PC-3 (cell line): ENCODE measurements at regions of chr15 and their contacts with region 1.

Region 1: DNA sequence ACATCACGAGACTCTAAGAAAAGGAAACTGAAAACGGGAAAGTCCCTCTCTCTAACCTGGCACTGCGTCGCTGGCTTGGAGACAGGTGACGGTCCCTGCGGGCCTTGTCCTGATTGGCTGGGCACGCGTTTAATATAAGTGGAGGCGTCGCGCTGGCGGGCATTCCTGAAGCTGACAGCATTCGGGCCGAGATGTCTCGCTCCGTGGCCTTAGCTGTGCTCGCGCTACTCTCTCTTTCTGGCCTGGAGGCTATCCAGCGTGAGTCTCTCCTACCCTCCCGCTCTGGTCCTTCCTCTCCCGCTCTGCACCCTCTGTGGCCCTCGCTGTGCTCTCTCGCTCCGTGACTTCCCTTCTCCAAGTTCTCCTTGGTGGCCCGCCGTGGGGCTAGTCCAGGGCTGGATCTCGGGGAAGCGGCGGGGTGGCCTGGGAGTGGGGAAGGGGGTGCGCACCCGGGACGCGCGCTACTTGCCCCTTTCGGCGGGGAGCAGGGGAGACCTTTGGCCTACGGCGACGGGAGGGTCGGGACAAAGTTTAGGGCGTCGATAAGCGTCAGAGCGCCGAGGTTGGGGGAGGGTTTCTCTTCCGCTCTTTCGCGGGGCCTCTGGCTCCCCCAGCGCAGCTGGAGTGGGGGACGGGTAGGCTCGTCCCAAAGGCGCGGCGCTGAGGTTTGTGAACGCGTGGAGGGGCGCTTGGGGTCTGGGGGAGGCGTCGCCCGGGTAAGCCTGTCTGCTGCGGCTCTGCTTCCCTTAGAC is at the start of gene B2M:
- DNase-seq: peak; percentile 98
- ATAC-seq: peak; percentile 88
- H3K4me3 ChIP-seq: peak within 1 kb of the TSS; percentile 76
- H3K27ac ChIP-seq: peak within 1 kb of the TSS; percentile 44
- H3K4me1 ChIP-seq: peaks cover 20% of the 10 kb centered on the region
- H3K27me3 ChIP-seq: no peaks in the 10 kb centered on the region
- CTCF ChIP-seq: no peak
- total RNA-seq, gene B2M: 476 and 608 TPM in 2 replicates

Region 2: GRCh38 chr15:44728576-44729407 is 17.3 kb after region 1 on chr15:
- CTCF ChIA-PET with region 1: interaction called, 30 read pairs
- POLR2A ChIA-PET with region 1: interaction called, 28 read pairs
- intact Hi-C with region 1: loop called (anchors 1 kb)
- DNase-seq: peak; percentile 98
- ATAC-seq: peak; percentile 80
- H3K4me3 ChIP-seq: peak overlapping the region; percentile 82
- H3K27ac ChIP-seq: peak overlapping the region; percentile 89
- H3K4me1 ChIP-seq: peaks cover 34% of the 10 kb centered on the region
- H3K27me3 ChIP-seq: no peaks in the 10 kb centered on the region
- CTCF ChIP-seq: no peak

Region 3: GRCh38 chr15:44738340-44738984 is 26.9 kb after region 1 on chr15:
- CTCF ChIA-PET with region 1: interaction called, 86 read pairs
- POLR2A ChIA-PET with region 1: interaction called, 6 read pairs
- intact Hi-C with region 1: loop called (anchors 1 kb)
- DNase-seq: peak; percentile 87
- ATAC-seq: no peak
- H3K4me3 ChIP-seq: no peak overlapping the region
- H3K27ac ChIP-seq: no peak overlapping the region
- H3K4me1 ChIP-seq: no peaks in the 10 kb centered on the region
- H3K27me3 ChIP-seq: no peaks in the 10 kb centered on the region
- CTCF ChIP-seq: peak; percentile 94

Region 4: GRCh38 chr15:45499426-45499825 is 787.9 kb after region 1 on chr15:
- CTCF ChIA-PET with region 1: no interaction called
- POLR2A ChIA-PET with region 1: no interaction called
- intact Hi-C with region 1: no loop called
- DNase-seq: no peak
- ATAC-seq: no peak
- H3K4me3 ChIP-seq: no peak overlapping the region
- H3K27ac ChIP-seq: no peak overlapping the region
- H3K4me1 ChIP-seq: no peaks in the 10 kb centered on the region
- H3K27me3 ChIP-seq: no peaks in the 10 kb centered on the region
- CTCF ChIP-seq: no peak